Left ventricle myocardium superior (tissue), 1 donor: ENCODE measurements at regions of chr1 and their contacts with region 1.

Region 1: DNA sequence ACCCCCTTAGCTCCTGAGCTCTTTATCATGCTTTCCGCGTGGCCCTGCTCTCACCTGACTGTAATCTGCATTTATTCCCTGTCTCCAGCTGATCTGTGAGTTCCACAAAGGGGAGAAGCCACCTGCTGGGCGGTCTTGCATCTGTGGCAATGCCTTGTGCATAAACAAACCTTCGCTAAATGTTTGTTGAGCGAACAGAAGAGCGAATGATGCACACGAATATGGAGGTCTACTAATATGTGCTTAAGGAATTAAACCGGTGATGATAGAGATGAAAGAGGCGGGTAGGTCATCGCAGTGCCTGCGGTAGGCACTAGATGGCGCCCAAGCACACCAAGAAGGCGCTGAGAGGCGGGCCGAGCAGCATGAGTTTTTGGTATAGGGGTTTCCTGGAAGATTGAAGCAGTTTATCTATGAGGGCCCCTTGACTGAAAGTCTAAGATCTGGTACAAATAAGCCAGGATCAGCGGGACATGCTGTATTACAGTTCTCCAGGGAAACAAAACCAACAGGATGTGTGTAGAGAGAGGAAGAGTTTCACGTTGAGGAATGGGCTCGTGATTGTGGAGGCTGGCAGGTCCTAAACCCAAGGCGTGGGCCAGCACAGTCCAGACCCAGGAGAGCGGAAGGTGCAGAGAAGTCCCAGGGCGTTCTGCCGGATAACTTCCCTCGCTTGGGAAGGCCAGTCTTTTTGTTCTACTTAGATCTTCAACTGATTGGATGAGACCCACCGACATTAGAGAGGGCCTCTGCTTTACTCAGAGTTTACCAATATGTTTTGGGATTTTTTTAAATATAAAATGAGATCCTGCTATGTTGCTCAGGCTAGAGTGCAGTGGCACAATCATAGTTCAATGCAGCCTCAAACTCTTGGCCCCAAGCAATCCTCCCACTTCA is 34.7 kb downstream of the TOMM20 start:
- DNase-seq: peak; percentile 86
- ATAC-seq: peak; percentile 80

Region 2: GRCh38 chr1:234486498-234487448 is 607.2 kb before region 1 on chr1:
- intact Hi-C with region 1: loop called (anchors 5 kb)
- DNase-seq: no peak
- ATAC-seq: peak; percentile 83

Region 3: GRCh38 chr1:234638832-234639799 is 454.8 kb before region 1 on chr1:
- intact Hi-C with region 1: no loop called
- DNase-seq: no peak
- ATAC-seq: no peak

Region 4: DNA sequence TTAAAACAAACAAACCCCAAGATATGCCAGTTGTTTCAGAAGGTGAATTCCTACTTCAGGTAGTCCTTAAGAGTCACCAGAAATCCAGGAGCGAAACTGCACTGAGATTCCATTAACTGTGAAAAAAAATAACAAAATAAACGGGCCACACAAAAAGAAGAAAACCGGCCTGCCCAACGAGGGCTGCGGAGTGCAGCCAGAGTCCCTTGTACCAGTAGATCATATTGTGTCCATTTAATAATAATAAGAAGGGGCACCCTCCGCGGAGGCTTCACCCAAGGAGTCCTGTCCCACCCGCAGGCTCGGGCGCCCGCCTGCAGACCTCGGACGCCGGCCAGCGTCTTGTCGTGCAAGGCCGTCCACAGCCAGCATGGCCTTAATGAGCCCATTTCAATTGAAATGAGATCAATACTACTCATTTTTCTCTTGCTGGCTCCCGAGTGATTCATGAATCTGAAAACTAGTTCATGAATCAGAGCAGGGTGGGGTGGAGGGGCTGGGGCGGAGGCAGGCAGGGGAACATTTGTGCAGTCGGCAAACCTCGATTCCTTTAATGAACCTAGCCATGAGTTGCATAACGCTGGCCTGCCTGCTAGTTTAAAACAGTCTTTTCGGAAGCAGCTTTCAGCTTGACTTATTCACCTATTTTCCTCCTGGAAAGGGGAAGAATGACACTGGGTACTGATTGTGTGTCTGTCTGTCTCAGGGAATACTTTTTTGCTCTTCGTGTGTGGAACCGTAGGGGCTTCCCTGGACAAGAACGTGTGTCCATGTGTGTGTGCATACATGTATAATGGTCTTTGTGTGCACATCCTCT is 370.8 kb before region 1 on chr1:
- intact Hi-C with region 1: no loop called
- DNase-seq: peak; percentile 69
- ATAC-seq: peak; percentile 34